Keratinocyte (primary cell): ENCODE measurements at regions of chr7 and their contacts with region 1.

Region 1: GRCh38 chr7:129751916-129752315 is 140.4 kb downstream of the NRF1 start:
- DNase-seq: no peak
- H3K4me3 ChIP-seq: no peak overlapping the region
- H3K27ac ChIP-seq: no peak overlapping the region
- H3K4me1 ChIP-seq: peaks cover 3% of the 10 kb centered on the region
- H3K27me3 ChIP-seq: no peaks in the 10 kb centered on the region
- CTCF ChIP-seq: no peak

Region 2: DNA sequence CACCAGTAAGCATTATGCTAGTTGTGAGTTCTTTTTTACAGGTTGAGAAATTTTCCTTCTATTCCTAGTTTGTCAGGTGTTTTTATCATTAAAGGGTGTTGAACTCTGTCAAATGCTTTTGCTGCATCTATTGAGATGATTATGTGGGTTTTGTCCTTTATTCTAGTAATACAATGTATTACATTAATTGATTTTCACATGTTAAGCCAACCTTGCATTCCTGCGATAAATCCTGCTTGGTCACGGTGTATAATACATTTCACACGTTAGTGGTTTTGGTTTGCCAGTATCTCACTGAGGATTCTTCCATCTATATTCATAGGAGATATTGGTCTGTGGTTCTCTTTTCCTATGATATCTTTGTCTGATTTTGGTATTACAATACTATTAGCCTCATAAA is 64.8 kb after region 1 on chr7:
- dilution Hi-C with region 1: loop called (anchors 10 kb)
- DNase-seq: no peak
- H3K4me3 ChIP-seq: no peak overlapping the region
- H3K27ac ChIP-seq: no peak overlapping the region
- H3K4me1 ChIP-seq: no peaks in the 10 kb centered on the region
- H3K27me3 ChIP-seq: no peaks in the 10 kb centered on the region
- CTCF ChIP-seq: no peak